Endothelial cell of umbilical vein (primary cell): ENCODE measurements at regions of chr5 and their contacts with region 1.

Region 1: DNA sequence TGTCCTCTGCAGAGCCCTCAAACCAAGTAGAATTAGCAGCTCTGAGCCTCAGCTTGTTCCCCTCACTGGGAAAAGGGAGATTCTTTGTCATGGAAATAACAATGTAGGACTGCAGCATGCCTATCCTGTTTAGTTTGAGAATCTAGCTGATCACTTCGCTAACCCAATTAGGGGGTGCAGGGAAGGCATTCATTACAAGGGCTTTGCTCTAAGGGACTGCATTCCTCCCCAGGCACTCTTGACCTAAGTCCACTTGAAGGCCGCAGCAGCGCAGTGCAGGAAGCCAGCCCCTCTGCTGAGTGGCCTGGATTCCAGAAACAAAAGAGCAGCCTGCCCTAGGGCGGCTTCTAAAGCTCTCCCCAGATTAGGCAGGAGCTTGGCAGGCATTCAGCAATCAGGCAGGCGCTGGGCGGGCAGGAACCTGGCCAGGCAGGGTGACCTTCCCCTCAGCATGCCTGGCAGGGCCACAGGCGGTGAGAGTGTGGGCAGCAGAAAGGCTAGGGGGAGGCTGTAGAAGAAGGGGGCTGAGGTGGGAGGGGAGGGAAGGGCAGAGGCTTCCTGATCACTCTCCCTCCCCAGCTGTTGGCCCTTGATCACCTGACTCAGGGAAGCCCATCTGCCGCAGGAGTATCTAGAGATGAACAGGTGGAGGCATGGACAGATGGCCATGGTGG is 24.8 kb downstream of the CCNJL start:
- DNase-seq: peak; percentile 80
- H3K4me3 ChIP-seq: no peak overlapping the region
- H3K27ac ChIP-seq: no peak overlapping the region
- H3K4me1 ChIP-seq: peaks cover 19% of the 10 kb centered on the region
- H3K27me3 ChIP-seq: no peaks in the 10 kb centered on the region
- CTCF ChIP-seq: no peak
- POLR2A ChIP-seq: no peak

Region 2: GRCh38 chr5:159965031-159965837 is 322.3 kb before region 1 on chr5:
- CTCF ChIA-PET with region 1: no interaction called
- POLR2A ChIA-PET with region 1: no interaction called
- dilution Hi-C with region 1: no loop called
- intact Hi-C with region 1: no loop called
- DNase-seq: peak; percentile 37
- H3K4me3 ChIP-seq: no peak overlapping the region
- H3K27ac ChIP-seq: no peak overlapping the region
- H3K4me1 ChIP-seq: no peaks in the 10 kb centered on the region
- H3K27me3 ChIP-seq: peaks cover 5 to 10% of the 10 kb centered on the region in 2 experiments
- CTCF ChIP-seq: peak; percentile 50 to 57
- POLR2A ChIP-seq: no peak

Region 3: DNA sequence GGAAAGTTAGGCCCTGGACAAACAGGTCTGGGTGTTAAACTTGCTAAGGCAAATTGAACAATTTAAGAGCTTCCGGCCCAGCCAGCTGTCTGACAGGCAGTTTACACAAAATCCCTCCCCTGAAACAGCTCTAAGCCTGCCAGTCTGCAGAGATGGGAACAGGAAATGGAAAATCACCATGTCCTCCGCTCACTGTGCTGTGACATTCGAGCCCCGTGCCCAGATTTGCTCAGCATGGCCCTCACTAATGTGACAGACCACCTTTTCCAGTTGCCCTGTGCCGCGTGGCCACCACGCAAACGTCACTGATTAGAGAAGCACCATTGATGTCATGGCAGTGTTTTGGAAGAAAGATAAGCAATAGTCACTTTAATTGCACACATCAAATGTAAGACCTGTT is 16.1 kb before region 1 on chr5:
- CTCF ChIA-PET with region 1: interaction called, 6 read pairs
- POLR2A ChIA-PET with region 1: no interaction called
- dilution Hi-C with region 1: no loop called
- intact Hi-C with region 1: loop called (anchors 2 kb)
- DNase-seq: peak; percentile 51
- H3K4me3 ChIP-seq: peak overlapping the region in 1 of 3 experiments; percentile 1
- H3K27ac ChIP-seq: peak overlapping the region; percentile 19
- H3K4me1 ChIP-seq: peaks cover 49% of the 10 kb centered on the region
- H3K27me3 ChIP-seq: no peaks in the 10 kb centered on the region
- CTCF ChIP-seq: no peak
- POLR2A ChIP-seq: no peak